Heart right ventricle (tissue), 16 donors: ENCODE measurements at regions of chr3 and their contacts with region 1.

Region 1: GRCh38 chr3:79086514-79086913 is 681.3 kb downstream of the ROBO1 start:
- DNase-seq: peak in 1 of 2 donors; percentile 25
- ATAC-seq: peak in 1 of 8 donors; percentile 55
- H3K4me3 ChIP-seq: no peak overlapping the region
- H3K27ac ChIP-seq: no peak overlapping the region
- H3K4me1 ChIP-seq: no peaks in the 10 kb centered on the region
- H3K27me3 ChIP-seq: no peaks in the 10 kb centered on the region
- CTCF ChIP-seq: peak; percentile 27 to 77 (median 64)

Region 2: DNA sequence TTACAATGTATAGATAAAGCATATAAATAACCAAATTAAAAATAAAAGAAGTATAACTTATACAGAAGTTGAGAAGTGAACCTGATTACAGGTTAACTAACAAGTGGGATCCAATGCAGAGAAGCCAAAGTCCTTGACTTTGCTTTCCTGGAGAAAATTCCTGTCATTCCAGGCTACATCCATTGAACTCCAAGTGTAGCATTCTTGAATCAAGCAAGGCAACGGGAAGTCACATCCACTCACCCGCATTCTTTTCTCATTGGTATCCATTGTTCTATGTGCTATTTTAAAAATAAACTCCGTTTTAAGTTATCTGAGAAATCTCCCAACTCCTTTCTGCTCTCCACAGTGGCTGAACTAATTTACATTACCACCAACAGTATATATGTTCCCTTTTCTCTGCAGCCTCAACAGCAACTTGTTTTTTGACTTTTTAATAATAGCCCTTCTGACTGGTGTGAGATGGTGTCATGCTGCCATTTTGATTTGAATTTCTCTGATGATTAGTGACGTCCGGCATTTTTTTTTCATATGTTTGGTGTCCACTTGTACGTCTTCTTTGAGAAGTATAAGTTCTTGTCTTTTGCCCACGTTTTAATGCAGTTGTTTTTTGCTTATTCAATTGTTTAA is 147.0 kb after region 1 on chr3:
- intact Hi-C with region 1: no loop called
- DNase-seq: no peak
- ATAC-seq: no peak
- H3K4me3 ChIP-seq: no peak overlapping the region
- H3K27ac ChIP-seq: no peak overlapping the region
- H3K4me1 ChIP-seq: no peaks in the 10 kb centered on the region
- H3K27me3 ChIP-seq: no peaks in the 10 kb centered on the region
- CTCF ChIP-seq: no peak

Region 3: DNA sequence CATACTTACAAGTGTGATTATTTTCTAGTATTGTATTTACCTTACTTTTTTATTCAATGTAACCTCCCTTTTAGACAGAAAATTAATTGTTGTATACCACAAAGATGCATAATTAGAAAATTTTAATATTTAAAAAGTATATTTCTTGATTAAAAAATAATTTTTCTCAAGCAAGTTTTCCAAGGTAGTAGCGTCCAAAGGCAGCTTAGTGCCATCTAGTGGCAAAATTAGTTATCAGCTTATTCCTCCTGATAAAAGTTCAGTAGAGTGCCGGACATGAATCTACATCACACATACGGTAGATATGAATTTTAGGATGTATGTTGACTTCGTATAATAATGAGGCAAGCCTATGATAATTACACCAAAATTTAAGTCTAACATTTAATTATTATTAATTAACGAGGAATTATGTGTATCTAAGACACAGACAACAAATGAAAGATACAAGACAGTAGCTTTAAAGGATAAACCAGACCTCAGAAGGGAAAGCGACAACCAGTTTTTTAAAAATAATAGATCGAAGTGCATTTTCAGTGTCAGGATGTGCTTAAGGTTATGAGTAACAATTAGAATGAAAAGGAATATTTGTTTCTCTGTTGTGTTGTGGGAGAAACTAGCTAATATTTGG is 275.3 kb after region 1 on chr3:
- intact Hi-C with region 1: loop called in 9 of 10 experiments (anchors 1 to 10 kb)
- DNase-seq: peak in 1 of 2 donors; percentile 6
- ATAC-seq: peak in 1 of 8 donors; percentile 42
- H3K4me3 ChIP-seq: peak overlapping the region in 1 of 10 donors; percentile 14
- H3K27ac ChIP-seq: peak overlapping the region in 3 of 10 donors; percentile 24 to 45 (median 38)
- H3K4me1 ChIP-seq: no peaks in the 10 kb centered on the region
- H3K27me3 ChIP-seq: peaks cover 0 to 17% (median 0%) of the 10 kb centered on the region in 7 donors
- CTCF ChIP-seq: peak; percentile 42 to 79 (median 73)

Region 4: GRCh38 chr3:79369306-79369705 is 282.8 kb after region 1 on chr3:
- intact Hi-C with region 1: loop called in 8 of 10 experiments (anchors 5 to 10 kb)
- DNase-seq: no peak
- ATAC-seq: no peak
- H3K4me3 ChIP-seq: no peak overlapping the region
- H3K27ac ChIP-seq: no peak overlapping the region
- H3K4me1 ChIP-seq: no peaks in the 10 kb centered on the region
- H3K27me3 ChIP-seq: no peaks in the 10 kb centered on the region
- CTCF ChIP-seq: no peak